CD8-positive, alpha-beta T cell (primary cell): ENCODE measurements at regions of chr5 and their contacts with region 1.

Region 1: GRCh38 chr5:134304311-134304710 is 62.7 kb downstream of the CDKL3 start:
- DNase-seq: no peak
- ATAC-seq: no peak
- H3K4me3 ChIP-seq: no peak overlapping the region
- H3K4me3 Mint-ChIP-seq: no peak overlapping the region
- H3K27ac ChIP-seq: no peak overlapping the region
- H3K27ac Mint-ChIP-seq: no peak overlapping the region
- H3K4me1 ChIP-seq: no peaks in the 10 kb centered on the region
- H3K4me1 Mint-ChIP-seq: no peaks in the 10 kb centered on the region
- H3K27me3 ChIP-seq: no peaks in the 10 kb centered on the region
- H3K27me3 Mint-ChIP-seq: no peaks in the 10 kb centered on the region
- CTCF ChIP-seq: no peak

Region 2: GRCh38 chr5:133746834-133747233 is 557.5 kb before region 1 on chr5:
- CTCF ChIA-PET with region 1: no interaction called
- POLR2A ChIA-PET with region 1: no interaction called
- intact Hi-C with region 1: no loop called
- DNase-seq: peak in 2 of 9 experiments; percentile 8 to 11
- ATAC-seq: no peak
- H3K4me3 ChIP-seq: no peak overlapping the region
- H3K4me3 Mint-ChIP-seq: no peak overlapping the region
- H3K27ac ChIP-seq: no peak overlapping the region
- H3K27ac Mint-ChIP-seq: no peak overlapping the region
- H3K4me1 ChIP-seq: no peaks in the 10 kb centered on the region
- H3K4me1 Mint-ChIP-seq: no peaks in the 10 kb centered on the region
- H3K27me3 ChIP-seq: no peaks in the 10 kb centered on the region
- H3K27me3 Mint-ChIP-seq: peaks cover 4% of the 10 kb centered on the region
- CTCF ChIP-seq: no peak

Region 3: GRCh38 chr5:134380346-134380745 is 76.0 kb after region 1 on chr5:
- CTCF ChIA-PET with region 1: interaction called, 5 read pairs
- POLR2A ChIA-PET with region 1: no interaction called
- intact Hi-C with region 1: loop called in 1 of 2 experiments (anchors 1 kb)
- DNase-seq: peak in 1 of 9 experiments; percentile 37
- ATAC-seq: peak; percentile 56
- H3K4me3 ChIP-seq: no peak overlapping the region
- H3K4me3 Mint-ChIP-seq: no peak overlapping the region
- H3K27ac ChIP-seq: no peak overlapping the region
- H3K27ac Mint-ChIP-seq: peak overlapping the region; percentile 79
- H3K4me1 ChIP-seq: peaks cover 11% of the 10 kb centered on the region
- H3K4me1 Mint-ChIP-seq: peaks cover 38% of the 10 kb centered on the region
- H3K27me3 ChIP-seq: no peaks in the 10 kb centered on the region
- H3K27me3 Mint-ChIP-seq: no peaks in the 10 kb centered on the region
- CTCF ChIP-seq: no peak

Region 4: GRCh38 chr5:134577796-134578363 is 273.6 kb after region 1 on chr5:
- CTCF ChIA-PET with region 1: interaction called, 10 read pairs
- POLR2A ChIA-PET with region 1: no interaction called
- intact Hi-C with region 1: loop called in 1 of 2 experiments (anchors 2 kb)
- DNase-seq: peak; percentile 55 to 82 (median 78)
- ATAC-seq: peak; percentile 77
- H3K4me3 ChIP-seq: no peak overlapping the region
- H3K4me3 Mint-ChIP-seq: no peak overlapping the region
- H3K27ac ChIP-seq: no peak overlapping the region
- H3K27ac Mint-ChIP-seq: peak overlapping the region; percentile 72
- H3K4me1 ChIP-seq: no peaks in the 10 kb centered on the region
- H3K4me1 Mint-ChIP-seq: peaks cover 9% of the 10 kb centered on the region
- H3K27me3 ChIP-seq: no peaks in the 10 kb centered on the region
- H3K27me3 Mint-ChIP-seq: no peaks in the 10 kb centered on the region
- CTCF ChIP-seq: peak; percentile 79

Region 5: DNA sequence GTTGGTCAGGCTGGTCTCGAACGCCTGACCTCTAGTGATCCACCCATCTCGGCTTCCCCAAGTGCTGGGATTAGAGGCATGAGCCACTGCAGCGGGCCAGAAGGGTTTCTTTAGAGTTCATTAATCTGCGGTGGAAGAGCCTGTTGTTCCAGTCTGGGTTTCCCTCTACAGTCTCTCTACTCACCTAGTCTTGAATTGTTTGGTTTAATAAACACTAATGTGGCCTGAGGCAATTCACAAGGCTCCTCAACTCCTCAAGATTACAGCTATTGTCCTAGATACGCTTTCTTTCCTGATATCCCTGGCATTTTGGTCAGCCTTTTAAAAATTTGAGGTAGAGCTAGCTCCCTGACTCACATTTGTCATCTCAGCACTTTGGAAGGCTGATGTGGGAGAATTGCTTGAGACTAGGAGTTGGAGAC is 332.9 kb after region 1 on chr5:
- CTCF ChIA-PET with region 1: no interaction called
- POLR2A ChIA-PET with region 1: no interaction called
- intact Hi-C with region 1: no loop called
- DNase-seq: no peak
- ATAC-seq: no peak
- H3K4me3 ChIP-seq: no peak overlapping the region
- H3K4me3 Mint-ChIP-seq: no peak overlapping the region
- H3K27ac ChIP-seq: no peak overlapping the region
- H3K27ac Mint-ChIP-seq: no peak overlapping the region
- H3K4me1 ChIP-seq: no peaks in the 10 kb centered on the region
- H3K4me1 Mint-ChIP-seq: peaks cover under 1% of the 10 kb centered on the region
- H3K27me3 ChIP-seq: no peaks in the 10 kb centered on the region
- H3K27me3 Mint-ChIP-seq: no peaks in the 10 kb centered on the region
- CTCF ChIP-seq: no peak